IMR-90 (cell line): ENCODE measurements at regions of chr5 and their contacts with region 1.

Region 1: DNA sequence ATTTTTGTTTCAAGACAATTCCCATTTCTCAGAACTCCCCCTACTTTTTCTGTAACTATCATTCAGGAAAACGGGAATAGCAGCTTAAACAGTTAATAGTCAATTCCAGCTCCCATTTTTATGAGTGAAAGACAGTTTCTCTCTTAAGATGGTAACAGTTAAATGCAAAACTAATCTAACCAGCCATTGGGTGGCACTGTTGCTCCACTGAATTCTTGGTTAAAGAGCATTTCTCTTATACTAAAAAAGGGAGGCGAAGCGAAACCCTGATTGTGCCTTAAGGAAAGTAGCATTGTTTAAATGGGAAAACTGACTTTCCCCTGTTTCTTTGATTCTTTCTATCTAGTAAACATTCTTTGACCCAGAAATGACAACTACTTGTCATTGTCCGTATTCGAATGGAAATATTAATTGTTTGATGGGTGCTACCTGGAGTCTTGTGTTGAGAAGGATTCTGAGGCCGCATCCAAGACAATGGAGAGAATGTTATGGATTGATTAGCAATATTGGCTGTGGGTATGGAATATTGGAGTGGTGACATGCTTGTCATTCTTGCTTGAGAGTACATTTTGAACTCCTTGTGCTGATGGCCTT is 507.8 kb downstream of the MAT2B start:
- DNase-seq: peak; percentile 86
- ATAC-seq: peak; percentile 86
- H3K4me3 ChIP-seq: no peak overlapping the region
- H3K27ac ChIP-seq: no peak overlapping the region
- H3K4me1 ChIP-seq: no peaks in the 10 kb centered on the region
- H3K27me3 ChIP-seq: no peaks in the 10 kb centered on the region
- CTCF ChIP-seq: peak; percentile 84
- POLR2A ChIP-seq: no peak
- RAD21 ChIP-seq: peak; percentile 90

Region 2: DNA sequence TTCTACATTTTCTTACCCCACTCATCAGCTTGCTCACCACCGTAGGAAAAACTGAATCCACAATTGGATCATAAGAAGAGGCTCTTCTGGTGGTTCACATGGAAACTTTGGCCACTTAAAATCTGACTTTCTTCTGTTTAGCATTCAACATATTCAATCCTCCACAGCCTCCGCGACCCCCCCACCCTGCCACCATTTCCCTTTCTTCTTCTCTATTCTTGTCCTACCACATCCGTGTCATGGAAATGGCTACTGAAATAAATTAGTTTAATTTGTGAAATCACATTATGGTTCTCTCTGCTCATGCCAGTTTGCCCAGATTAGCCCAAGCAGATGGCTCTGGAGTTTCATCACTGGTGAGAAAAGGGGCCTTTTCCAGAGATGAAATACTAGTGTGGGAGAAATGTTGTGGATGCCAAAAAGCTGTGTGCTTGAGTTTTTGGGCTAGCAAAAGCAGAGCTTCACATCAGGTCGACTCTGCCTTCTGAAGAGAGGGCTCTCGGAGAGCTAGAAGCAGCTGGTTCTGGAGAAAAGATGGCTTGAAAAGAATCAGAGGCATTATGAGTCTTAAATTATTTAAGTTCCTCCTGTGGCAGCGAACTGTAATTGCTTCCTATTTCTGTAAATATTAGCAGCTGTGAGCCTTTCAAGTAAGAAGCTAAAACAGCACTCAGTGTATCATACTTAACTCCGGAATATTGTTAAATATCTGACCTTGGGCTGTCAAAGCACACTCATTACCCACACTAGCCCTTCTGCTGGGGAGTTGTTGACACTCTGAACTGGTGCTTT is 400.6 kb before region 1 on chr5:
- CTCF ChIA-PET with region 1: no interaction called
- POLR2A ChIA-PET with region 1: no interaction called
- dilution Hi-C with region 1: no loop called
- in situ Hi-C with region 1: no loop called
- intact Hi-C with region 1: no loop called
- DNase-seq: peak; percentile 16
- ATAC-seq: peak; percentile 44; the same call in 1 of the 2 replicates
- H3K4me3 ChIP-seq: no peak overlapping the region
- H3K27ac ChIP-seq: no peak overlapping the region; the same call in 1 of the 2 replicates
- H3K4me1 ChIP-seq: peaks cover 10% of the 10 kb centered on the region
- H3K27me3 ChIP-seq: no peaks in the 10 kb centered on the region
- CTCF ChIP-seq: no peak
- POLR2A ChIP-seq: no peak
- RAD21 ChIP-seq: no peak

Region 3: DNA sequence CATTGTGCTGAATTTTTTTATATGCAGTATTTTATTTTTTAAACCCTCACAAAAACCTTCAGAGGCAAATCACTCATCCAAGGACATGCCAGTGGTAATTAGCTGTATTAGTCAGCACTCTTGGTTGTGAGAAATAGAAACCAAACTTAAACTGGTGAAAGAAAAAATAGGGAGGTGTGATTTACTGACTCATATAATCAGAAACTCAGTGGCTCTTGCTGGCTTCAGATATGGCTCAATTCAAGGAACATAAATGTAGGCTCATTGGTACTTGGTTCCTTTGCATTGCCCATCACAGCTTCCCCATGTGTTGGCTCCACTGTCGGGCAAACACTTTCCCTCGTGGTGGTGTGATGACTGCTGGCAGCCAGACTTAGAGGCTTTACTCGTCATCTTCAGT is 10.5 kb before region 1 on chr5:
- CTCF ChIA-PET with region 1: interaction called, 13 read pairs
- POLR2A ChIA-PET with region 1: no interaction called
- dilution Hi-C with region 1: no loop called
- in situ Hi-C with region 1: no loop called
- intact Hi-C with region 1: no loop called
- DNase-seq: peak; percentile 22
- ATAC-seq: peak; percentile 29; the same call in 1 of the 2 replicates
- H3K4me3 ChIP-seq: no peak overlapping the region
- H3K27ac ChIP-seq: no peak overlapping the region
- H3K4me1 ChIP-seq: no peaks in the 10 kb centered on the region
- H3K27me3 ChIP-seq: no peaks in the 10 kb centered on the region
- CTCF ChIP-seq: no peak
- POLR2A ChIP-seq: no peak
- RAD21 ChIP-seq: no peak

Region 4: DNA sequence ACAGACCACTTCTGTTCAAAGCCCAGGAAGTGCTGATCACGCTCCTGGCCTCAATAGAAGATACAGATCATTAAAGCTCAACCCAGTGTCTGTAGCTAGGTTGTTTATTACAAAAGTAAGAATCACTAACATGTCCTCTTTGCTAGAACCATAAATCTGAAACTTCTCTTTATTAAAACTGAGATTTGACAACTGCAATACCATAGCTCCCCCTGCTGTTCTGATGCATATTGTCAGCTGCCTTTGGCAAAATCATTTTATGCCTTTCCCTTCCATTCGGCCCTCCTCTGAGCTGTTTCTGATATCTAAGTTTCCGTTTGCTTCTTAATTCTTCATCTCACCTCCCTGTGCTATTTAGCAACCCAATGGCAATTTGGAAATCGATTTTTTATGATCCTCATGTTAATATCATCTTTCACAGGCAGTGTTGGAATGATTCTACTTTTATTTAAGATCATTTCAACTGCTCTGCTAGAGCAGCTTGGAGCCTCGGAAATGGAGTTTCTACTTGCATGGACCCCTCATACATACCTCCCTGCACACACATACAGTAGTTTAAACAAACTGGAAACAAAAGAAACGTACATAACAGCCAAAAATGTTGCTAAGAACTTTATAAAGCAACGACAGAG is 491.1 kb after region 1 on chr5:
- CTCF ChIA-PET with region 1: interaction called, 11 read pairs
- POLR2A ChIA-PET with region 1: no interaction called
- dilution Hi-C with region 1: loop called (anchors 25 kb)
- in situ Hi-C with region 1: loop called (anchors 10 kb)
- intact Hi-C with region 1: loop called (anchors 1 kb)
- DNase-seq: peak; percentile 69
- ATAC-seq: peak; percentile 89
- H3K4me3 ChIP-seq: no peak overlapping the region
- H3K27ac ChIP-seq: no peak overlapping the region
- H3K4me1 ChIP-seq: no peaks in the 10 kb centered on the region
- H3K27me3 ChIP-seq: no peaks in the 10 kb centered on the region
- CTCF ChIP-seq: peak; percentile 93
- POLR2A ChIP-seq: no peak
- RAD21 ChIP-seq: peak; percentile 94

Region 5: DNA sequence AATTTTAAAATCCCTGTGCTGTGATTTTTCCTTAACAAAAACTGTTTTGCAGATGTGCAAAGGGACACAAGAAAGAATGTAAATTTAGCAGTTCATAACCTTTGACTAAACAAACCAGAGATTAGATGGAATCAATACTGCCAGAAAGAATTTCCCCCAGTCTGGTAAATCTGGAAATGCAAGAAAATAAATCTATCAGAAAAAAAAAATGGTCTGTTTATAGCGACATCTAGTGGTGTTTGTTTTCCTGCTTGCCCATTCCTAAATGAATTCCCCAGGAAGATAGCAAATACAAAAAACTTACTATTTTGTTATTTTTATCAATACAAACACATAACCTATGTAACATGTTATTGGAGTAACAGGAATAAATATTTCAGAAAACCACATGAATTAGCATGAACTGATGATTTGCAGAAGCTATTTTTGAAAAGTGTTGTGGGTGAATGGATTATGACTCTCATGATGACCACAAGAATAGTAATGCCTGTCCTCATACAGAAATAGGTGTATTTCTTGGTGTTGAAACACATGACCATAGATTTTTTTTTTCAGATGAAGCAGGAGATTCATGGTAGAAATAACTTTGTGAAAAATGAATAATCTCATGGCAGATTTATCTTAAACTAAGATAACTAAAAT is 1196.0 kb after region 1 on chr5:
- CTCF ChIA-PET with region 1: interaction called, 4 read pairs
- POLR2A ChIA-PET with region 1: no interaction called
- dilution Hi-C with region 1: no loop called
- in situ Hi-C with region 1: loop called (anchors 25 kb)
- intact Hi-C with region 1: loop called (anchors 5 kb)
- DNase-seq: peak; percentile 37
- ATAC-seq: no peak
- H3K4me3 ChIP-seq: no peak overlapping the region
- H3K27ac ChIP-seq: no peak overlapping the region
- H3K4me1 ChIP-seq: no peaks in the 10 kb centered on the region
- H3K27me3 ChIP-seq: no peaks in the 10 kb centered on the region
- CTCF ChIP-seq: peak; percentile 61
- POLR2A ChIP-seq: no peak
- RAD21 ChIP-seq: peak; percentile 37